WTC11 (cell line): ENCODE measurements at regions of chr13 and their contacts with region 1.

Region 1: DNA sequence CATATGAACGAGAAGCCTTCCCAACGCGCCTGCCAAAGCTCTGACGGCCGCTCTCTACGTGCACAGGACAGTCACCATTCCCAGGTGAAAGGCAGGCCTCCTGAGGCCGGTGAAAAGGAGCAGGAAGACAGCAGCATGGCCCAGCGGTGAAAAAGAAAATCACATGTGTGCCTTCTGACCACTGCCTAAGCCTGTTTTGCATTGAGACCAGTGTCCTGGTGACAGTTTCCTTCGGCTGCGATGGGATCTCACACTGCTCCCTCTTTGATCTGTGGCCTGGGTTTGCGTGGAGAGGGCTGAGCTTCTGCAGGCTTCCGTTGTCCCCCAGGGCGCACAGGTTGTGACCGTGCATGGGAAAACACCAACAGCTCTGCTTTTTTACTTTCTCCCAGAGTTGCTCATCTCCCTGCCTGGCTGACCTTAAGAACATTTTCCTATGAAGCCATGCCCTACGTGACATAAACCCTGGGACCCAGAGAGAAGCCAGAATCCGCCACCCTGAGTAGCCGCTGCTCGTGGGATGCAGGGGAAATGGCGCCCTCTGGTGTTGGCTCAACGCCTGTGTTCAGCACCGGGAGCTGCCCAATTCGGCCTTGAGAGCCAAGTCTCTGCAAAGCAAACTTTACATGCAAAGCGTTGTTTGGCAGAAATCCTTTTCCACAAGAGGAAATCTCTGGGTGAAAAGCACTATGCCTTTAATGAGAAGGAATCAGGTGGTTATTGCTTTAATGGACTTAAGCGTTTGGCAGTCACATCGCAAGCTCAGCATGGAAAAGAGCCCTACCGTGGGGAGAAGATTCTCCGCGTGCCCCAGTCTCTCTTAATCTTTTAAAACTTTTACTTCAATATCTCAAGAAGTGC is 112.2 kb upstream of the GPR12 start:
- DNase-seq: peak; percentile 88
- ATAC-seq: peak; percentile 92
- H3K4me3 Mint-ChIP-seq: no peak overlapping the region
- H3K27ac Mint-ChIP-seq: no peak overlapping the region
- H3K4me1 Mint-ChIP-seq: peaks cover 26% of the 10 kb centered on the region
- H3K27me3 Mint-ChIP-seq: 0 out of 2 replicates have a peak, but pooled peaks cover 2% of the 10 kb centered on the region
- CTCF ChIP-seq: peak; percentile 89

Region 2: GRCh38 chr13:25192936-25193335 is 1679.8 kb before region 1 on chr13:
- CTCF ChIA-PET with region 1: no interaction called
- POLR2A ChIA-PET with region 1: interaction called, 10 read pairs
- DNase-seq: no peak
- ATAC-seq: no peak
- H3K4me3 Mint-ChIP-seq: no peak overlapping the region
- H3K27ac Mint-ChIP-seq: no peak overlapping the region
- H3K4me1 Mint-ChIP-seq: no peaks in the 10 kb centered on the region
- H3K27me3 Mint-ChIP-seq: peaks cover 13% of the 10 kb centered on the region
- CTCF ChIP-seq: no peak

Region 3: GRCh38 chr13:26749285-26749684 is 123.5 kb before region 1 on chr13:
- CTCF ChIA-PET with region 1: interaction called, 11 read pairs
- POLR2A ChIA-PET with region 1: no interaction called
- DNase-seq: no peak
- ATAC-seq: no peak
- H3K4me3 Mint-ChIP-seq: no peak overlapping the region
- H3K27ac Mint-ChIP-seq: no peak overlapping the region
- H3K4me1 Mint-ChIP-seq: peaks cover 9% of the 10 kb centered on the region
- H3K27me3 Mint-ChIP-seq: peaks cover 7% of the 10 kb centered on the region; the same call in 1 of the 2 replicates
- CTCF ChIP-seq: no peak

Region 4: DNA sequence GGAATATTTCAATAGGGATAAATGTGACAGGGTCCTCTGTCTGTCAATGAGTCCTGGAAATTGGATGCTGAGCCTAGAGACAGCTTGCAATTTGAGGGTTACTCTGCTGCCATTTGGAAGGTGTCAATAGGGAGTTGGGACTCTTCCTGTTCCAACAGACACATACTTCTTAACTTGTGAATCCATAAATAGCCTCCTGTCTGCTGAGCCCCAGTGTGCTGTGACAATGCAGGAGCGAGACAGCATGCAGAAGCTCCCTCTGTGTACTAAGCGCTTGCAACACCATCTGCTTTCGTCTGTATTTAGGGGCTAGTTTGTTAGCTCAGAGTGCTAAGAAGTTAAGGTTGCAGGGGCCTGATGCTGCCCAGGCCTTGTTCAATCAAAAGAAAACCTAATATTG is 53.7 kb before region 1 on chr13:
- CTCF ChIA-PET with region 1: interaction called, 10 read pairs
- POLR2A ChIA-PET with region 1: no interaction called
- DNase-seq: no peak
- ATAC-seq: no peak
- H3K4me3 Mint-ChIP-seq: no peak overlapping the region
- H3K27ac Mint-ChIP-seq: no peak overlapping the region
- H3K4me1 Mint-ChIP-seq: no peaks in the 10 kb centered on the region
- H3K27me3 Mint-ChIP-seq: peaks cover 2% of the 10 kb centered on the region; the same call in 1 of the 2 replicates
- CTCF ChIP-seq: no peak

Region 5: DNA sequence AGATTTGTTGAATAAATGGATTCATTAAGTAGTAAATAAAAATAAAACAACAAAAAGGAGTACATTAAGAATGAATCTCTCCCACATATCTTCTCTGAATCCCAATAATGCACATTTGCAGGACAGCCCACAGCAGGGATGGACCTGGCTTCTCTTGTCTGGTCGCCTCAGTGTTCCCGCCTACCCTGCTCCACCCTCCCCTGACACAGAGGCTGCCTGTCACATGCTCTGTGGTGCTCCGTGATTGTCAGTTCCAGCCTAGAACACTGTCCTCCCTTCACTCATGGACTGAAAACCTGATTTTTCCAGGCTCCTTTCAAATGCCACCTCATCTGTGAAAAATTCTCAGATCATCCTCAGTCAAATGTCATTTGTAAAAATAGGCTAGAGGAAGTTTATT is 17.7 kb before region 1 on chr13:
- CTCF ChIA-PET with region 1: interaction called, 17 read pairs
- POLR2A ChIA-PET with region 1: no interaction called
- DNase-seq: no peak
- ATAC-seq: no peak
- H3K4me3 Mint-ChIP-seq: no peak overlapping the region
- H3K27ac Mint-ChIP-seq: no peak overlapping the region
- H3K4me1 Mint-ChIP-seq: peaks cover 8% of the 10 kb centered on the region
- H3K27me3 Mint-ChIP-seq: no peaks in the 10 kb centered on the region; the same call in 1 of the 2 replicates
- CTCF ChIP-seq: no peak

Region 6: DNA sequence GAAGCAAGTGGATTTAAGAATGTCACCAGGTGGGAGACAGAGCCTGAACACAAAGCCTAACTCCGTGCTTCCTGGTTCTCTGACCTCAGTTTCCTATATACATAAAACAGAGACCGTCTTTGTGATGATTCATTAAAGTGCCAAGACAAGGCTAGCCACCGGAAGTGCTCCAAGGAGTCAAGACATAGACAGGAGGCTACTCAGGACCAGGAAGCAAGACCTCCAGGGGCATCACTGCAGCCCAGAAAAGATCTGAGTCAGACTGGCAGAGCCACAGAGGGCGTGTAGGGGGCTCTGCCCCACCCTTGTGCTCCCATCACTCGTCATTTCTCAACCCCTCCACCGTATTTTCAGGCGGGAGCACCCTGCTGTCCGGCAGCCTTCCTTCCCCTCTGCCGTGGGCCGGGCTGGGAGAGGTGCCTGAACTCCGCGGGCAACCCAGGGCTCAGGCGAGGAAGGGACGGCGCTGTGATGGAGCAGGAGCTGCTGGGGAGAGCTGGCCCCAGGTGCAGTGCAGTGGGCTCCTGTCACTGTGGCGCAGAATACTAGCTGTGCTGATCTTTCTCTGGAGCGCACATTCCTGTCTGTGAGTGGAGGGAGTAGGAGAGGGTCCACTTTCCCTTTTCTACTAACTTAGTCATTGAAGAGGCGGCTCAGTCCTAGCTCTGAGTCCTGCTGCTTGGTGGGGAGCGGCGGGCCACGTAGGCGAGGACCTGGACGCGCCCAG is 22.5 kb after region 1 on chr13:
- CTCF ChIA-PET with region 1: interaction called, 13 read pairs
- POLR2A ChIA-PET with region 1: no interaction called
- DNase-seq: peak; percentile 21
- ATAC-seq: peak; percentile 68
- H3K4me3 Mint-ChIP-seq: no peak overlapping the region
- H3K27ac Mint-ChIP-seq: no peak overlapping the region
- H3K4me1 Mint-ChIP-seq: peaks cover 14% of the 10 kb centered on the region
- H3K27me3 Mint-ChIP-seq: no peaks in the 10 kb centered on the region
- CTCF ChIP-seq: no peak